Panc1 (cell line): ENCODE measurements at regions of chr2 and their contacts with region 1.

Region 1: DNA sequence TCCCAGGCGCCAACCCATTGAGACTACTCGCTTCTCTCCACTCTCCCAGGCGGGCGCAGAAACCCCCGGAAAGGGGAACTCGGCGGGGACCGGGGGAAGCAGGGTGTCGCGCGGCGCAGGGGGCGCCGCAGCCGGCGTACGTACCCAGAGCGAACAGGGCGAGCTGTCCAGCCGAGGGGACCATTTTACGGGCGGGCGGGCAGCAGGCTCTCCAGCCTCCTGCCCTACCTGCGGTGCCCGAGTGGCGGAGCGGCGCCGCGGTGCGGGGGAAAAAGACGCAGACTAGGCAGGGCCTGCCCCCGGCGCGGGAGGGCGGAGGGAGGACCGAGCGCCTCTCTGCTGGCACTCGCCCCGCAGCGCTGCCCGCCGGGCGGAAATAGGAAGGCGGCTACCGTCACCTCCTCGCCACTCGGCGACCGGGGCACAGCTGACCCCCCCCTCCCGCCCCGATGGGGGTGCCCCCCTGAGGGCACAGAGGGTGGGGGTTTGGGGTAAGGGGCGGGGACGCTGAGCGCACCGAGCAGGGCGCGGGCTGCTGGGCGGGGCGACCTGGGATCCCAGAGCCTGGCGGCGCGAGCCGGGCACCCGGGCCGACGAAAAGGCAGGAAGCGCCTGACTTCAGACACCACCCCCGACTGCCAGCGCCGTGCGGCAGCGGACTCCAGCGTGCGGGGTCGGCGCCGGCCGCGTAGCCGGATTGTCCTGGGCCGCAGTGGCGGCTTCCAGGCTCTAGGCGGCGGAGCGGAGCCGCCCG is at the start of gene TGFA:
- DNase-seq: no peak
- ATAC-seq: peak; percentile 90
- H3K4me3 ChIP-seq: peak within 1 kb of the TSS; percentile 48 to 61
- H3K27ac ChIP-seq: no peak within 1 kb of the TSS
- H3K4me1 ChIP-seq: peaks cover 4% of the 10 kb centered on the region
- H3K27me3 ChIP-seq: peaks cover 25% of the 10 kb centered on the region
- CTCF ChIP-seq: peak; percentile 96
- total RNA-seq, gene TGFA: 1.7 TPM

Region 2: DNA sequence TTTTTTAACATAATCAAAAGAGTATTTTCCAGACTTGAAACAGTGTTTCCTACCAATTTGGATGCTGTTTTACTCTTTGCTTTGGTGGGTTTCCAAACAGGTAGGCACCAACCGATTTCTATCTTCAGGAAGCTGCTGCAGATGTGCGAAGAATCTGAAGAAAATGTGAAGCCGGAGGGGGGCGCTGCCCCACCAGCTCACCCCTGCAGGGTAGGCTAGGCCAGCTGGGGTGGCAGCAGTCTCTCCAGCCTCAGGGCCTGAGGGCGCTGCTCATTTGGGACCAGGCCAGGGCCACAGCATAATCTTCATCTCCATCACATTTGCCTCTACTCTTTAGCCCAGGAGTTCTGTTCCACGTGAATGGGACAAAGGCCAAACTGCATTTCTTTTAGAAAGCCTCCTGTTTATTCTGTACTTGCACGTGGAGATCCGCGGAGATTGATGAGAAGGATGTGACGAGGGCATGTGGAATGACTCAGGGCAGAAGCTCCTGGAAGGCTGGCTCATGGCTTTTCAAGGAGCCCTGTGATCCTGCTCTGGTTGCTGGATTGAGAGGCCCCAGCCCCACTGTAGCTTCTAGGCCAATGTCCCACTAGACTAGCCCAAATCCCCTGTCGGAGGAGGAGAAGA is 167.7 kb before region 1 on chr2:
- CTCF ChIA-PET with region 1: no interaction called
- POLR2A ChIA-PET with region 1: no interaction called
- in situ Hi-C with region 1: no loop called
- intact Hi-C with region 1: no loop called
- DNase-seq: no peak
- ATAC-seq: no peak
- H3K4me3 ChIP-seq: no peak overlapping the region
- H3K27ac ChIP-seq: no peak overlapping the region
- H3K4me1 ChIP-seq: no peaks in the 10 kb centered on the region
- H3K27me3 ChIP-seq: no peaks in the 10 kb centered on the region
- CTCF ChIP-seq: no peak

Region 3: GRCh38 chr2:70596293-70596692 is 42.5 kb after region 1 on chr2:
- CTCF ChIA-PET with region 1: no interaction called
- POLR2A ChIA-PET with region 1: no interaction called
- in situ Hi-C with region 1: no loop called
- intact Hi-C with region 1: no loop called
- DNase-seq: no peak
- ATAC-seq: peak; percentile 68; the same call in 1 of the 2 replicates
- H3K4me3 ChIP-seq: no peak overlapping the region
- H3K27ac ChIP-seq: no peak overlapping the region
- H3K4me1 ChIP-seq: no peaks in the 10 kb centered on the region; the same call in 1 of the 2 replicates
- H3K27me3 ChIP-seq: no peaks in the 10 kb centered on the region
- CTCF ChIP-seq: no peak

Region 4: DNA sequence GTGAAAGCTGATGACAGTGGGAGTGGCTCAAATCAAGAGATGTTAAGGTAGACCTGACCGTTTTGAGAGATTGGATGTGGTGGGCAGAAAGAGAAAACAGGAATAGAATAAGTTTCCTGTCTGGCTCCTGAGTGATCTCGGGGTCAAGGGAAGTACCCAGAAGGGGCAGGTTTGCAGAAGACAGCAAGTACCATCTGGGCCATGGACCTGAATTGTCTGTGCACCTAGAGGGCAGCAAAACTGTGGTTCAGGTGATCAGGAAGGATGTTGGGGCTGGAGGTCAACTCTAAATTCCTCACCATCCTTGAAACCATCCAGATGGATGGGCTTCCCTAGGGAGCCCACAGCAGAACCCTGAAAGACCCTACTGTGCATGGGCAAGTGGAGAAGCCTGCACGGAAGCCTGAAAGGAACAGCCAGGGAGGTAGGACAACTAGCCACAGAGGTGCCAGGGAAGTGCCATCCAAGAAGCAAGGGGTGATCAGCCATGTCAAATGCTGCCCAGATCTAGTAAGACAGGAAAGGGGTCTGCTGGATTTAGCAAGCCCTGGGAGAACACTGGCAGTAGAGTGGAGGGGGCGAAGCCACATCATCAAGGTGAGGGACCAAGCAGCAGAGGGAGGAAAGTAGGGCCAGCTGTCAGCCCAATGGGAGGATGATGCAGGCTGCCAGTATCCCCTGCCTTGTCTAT is 432.9 kb after region 1 on chr2:
- CTCF ChIA-PET with region 1: no interaction called
- POLR2A ChIA-PET with region 1: interaction called, 10 read pairs
- in situ Hi-C with region 1: no loop called
- intact Hi-C with region 1: no loop called
- DNase-seq: no peak
- ATAC-seq: no peak
- H3K4me3 ChIP-seq: no peak overlapping the region
- H3K27ac ChIP-seq: no peak overlapping the region
- H3K4me1 ChIP-seq: no peaks in the 10 kb centered on the region
- H3K27me3 ChIP-seq: no peaks in the 10 kb centered on the region
- CTCF ChIP-seq: no peak